RWPE1 (cell line): ENCODE measurements at regions of chr12 and their contacts with region 1.

Region 1: DNA sequence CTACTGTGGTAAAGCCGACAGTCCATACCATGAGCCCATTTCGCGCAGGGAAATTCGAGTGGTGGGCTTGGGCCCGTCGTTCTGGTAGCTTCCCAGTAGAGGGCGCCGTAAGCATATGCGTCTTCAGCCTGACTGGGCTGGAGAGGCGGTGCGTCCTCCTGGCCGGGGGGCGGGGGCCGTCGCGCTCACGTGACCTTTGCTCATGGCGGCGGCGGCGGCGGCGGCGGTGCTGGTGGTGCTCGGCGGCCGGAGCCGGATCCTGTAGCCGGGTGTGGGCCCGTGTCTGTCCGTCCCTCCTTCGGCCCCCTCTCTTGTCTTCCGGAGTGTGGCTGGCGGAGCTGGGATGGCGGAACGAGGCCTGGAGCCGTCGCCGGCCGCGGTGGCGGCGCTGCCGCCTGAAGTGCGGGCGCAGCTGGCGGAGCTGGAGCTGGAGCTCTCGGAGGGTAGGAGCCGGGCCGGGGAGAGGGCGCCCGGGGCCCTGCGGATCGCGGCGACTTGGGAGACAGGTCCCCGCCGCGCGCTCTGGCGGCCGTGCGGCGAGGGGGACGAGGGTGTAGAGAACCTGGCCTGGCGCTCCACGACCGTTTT is at the start of gene DIP2B:
- DNase-seq: peak; percentile 87
- H3K27ac ChIP-seq: peak within 1 kb of the TSS; percentile 88
- CTCF ChIP-seq: peak; percentile 89

Region 2: GRCh38 chr12:50637870-50638481 is 133.1 kb after region 1 on chr12:
- CTCF ChIA-PET with region 1: interaction called, 21 read pairs
- POLR2A ChIA-PET with region 1: no interaction called
- DNase-seq: peak; percentile 50
- H3K27ac ChIP-seq: no peak overlapping the region
- CTCF ChIP-seq: peak; percentile 77